A549 (cell line): ENCODE measurements at regions of chr19 and their contacts with region 1.

Region 1: GRCh38 chr19:7852851-7853769 is 21.1 kb downstream of the PRR36 start:
- DNase-seq: peak; percentile 75 to 78
- ATAC-seq: peak; percentile 76 to 95
- H3K4me3 ChIP-seq: no peak overlapping the region
- H3K27ac ChIP-seq: no peak overlapping the region
- H3K4me1 ChIP-seq: peaks cover 3% of the 10 kb centered on the region; the same call in 1 of the 3 replicates
- CTCF ChIP-seq: peak; percentile 71
- EP300 ChIP-seq: no peak
- POLR2A ChIP-seq: no peak
- RAD21 ChIP-seq: peak; percentile 70 to 76

Region 2: DNA sequence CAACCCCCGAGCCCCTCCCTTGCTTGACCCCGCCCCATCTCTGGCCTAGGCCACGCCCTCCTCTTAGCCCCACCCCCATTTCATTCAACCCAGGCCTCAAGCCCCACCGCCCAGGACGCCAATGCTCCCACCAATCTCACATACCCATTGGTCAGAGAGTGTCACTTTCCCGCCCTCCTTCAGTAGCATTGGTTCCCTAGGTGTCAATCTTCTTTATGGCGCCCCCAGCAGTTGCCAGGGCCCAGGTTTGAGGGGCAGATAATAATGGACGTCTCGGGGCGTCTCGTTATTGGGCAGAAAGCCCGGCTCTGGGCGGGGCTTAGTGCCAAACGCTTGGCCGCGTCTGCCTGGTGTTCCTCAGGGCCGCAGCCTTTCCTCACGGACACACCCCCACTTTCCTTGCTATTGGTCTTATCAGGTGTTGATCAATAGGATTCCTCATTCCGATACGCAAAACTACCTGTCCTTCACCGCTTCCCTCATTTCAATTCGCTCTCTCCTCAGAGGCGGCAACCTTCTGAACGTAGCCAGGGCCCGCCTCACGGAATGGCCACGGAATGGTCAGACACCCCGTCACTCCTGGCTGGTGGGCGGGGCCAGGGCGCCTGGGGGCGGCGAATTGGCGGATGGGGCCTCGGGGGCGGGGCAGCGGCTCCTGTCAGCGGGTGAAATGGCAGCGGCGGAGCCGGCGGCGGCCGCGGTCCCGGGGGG is 23.4 kb before region 1 on chr19 and contains the start of gene EVI5L:
- CTCF ChIA-PET with region 1: interaction called, 20 read pairs
- POLR2A ChIA-PET with region 1: no interaction called
- DNase-seq: peak; percentile 96 to 99
- ATAC-seq: peak; percentile 93 to 95
- H3K4me3 ChIP-seq: peak within 1 kb of the TSS; percentile 89
- H3K27ac ChIP-seq: peak within 1 kb of the TSS; percentile 67 to 85
- H3K4me1 ChIP-seq: peaks cover 10% of the 10 kb centered on the region; the same call in 1 of the 3 replicates
- CTCF ChIP-seq: no peak
- EP300 ChIP-seq: no peak
- POLR2A ChIP-seq: no peak
- RAD21 ChIP-seq: no peak
- polyA plus RNA-seq, gene EVI5L: 1.1 and 1.2 TPM in 2 replicates

Region 3: GRCh38 chr19:7903244-7904073 is 50.3 kb after region 1 on chr19 and contains the start of gene MAP2K7:
- CTCF ChIA-PET with region 1: interaction called, 13 read pairs
- POLR2A ChIA-PET with region 1: no interaction called
- DNase-seq: peak; percentile 86 to 98
- ATAC-seq: peak; percentile 65 to 83
- H3K4me3 ChIP-seq: peak within 1 kb of the TSS; percentile 72
- H3K27ac ChIP-seq: peak within 1 kb of the TSS; percentile 90 to 97
- H3K4me1 ChIP-seq: peaks cover 8% of the 10 kb centered on the region
- CTCF ChIP-seq: peak; percentile 58
- EP300 ChIP-seq: no peak
- POLR2A ChIP-seq: peak; percentile 98
- RAD21 ChIP-seq: peak; percentile 17 to 39; a peak in 3 of 5 replicates
- polyA plus RNA-seq, gene MAP2K7: 5.5 TPM in 2 replicates